Left colon (tissue), 2 donors: ENCODE measurements at regions of chr10 and their contacts with region 1.

Region 1: DNA sequence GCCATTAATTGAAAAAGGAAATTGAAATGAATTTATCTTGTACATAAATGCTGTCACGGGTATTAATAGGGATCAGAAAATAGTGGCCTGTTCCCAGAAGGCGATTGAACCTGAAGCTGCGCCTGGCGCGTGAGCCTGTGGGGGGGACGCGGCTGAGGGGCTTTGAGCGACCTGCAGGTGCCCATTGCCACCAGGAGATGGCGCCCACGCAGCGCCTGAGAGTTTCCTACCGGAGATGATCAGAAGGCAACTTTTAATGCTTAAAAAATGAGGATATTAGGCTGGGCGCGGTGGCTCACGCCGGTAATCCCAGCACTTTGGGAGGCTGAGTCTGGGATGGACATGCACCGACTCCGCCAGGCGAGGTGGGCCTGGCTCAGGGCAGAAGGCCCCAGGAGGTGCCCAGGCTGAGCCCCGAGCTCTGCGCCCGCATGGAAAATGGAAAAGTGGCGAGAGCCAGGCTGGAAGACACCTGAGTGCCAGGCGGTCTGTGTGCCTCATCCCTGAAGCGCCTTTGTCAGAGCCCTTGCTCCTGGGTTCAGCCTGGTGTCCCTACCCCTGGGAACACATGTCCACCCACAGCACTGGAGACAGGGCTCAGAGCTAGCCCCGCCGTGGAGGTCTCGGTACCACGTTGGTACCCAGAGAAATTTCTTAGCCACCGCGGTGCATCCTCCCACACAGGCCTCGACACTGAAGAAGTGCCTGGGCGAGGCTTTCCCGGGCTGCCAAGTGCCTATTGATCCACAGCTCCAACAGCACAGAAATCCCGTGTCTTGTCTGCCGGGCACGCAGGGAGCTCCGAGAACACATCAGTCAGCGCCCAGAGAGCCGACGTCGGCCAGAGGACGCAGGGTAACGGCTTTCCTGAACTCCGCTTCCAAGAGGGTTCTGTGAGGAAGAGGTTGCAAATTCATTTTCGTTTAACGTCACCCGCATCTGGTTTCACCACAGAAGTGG is 117.4 kb downstream of the INPP5A start:
- DNase-seq: peak in 1 of 2 donors; percentile 53
- ATAC-seq: peak; percentile 70

Region 2: GRCh38 chr10:132788180-132788830 is 133.3 kb after region 1 on chr10:
- intact Hi-C with region 1: loop called in 1 of 2 experiments (anchors 10 kb)
- DNase-seq: peak in 1 of 2 donors; percentile 34
- ATAC-seq: peak; percentile 73

Region 3: GRCh38 chr10:132910901-132911785 is 256.2 kb after region 1 on chr10:
- intact Hi-C with region 1: no loop called
- DNase-seq: no peak
- ATAC-seq: no peak